ENCODE measurements at regions of chrX and their contacts with region 1.

Region 1: DNA sequence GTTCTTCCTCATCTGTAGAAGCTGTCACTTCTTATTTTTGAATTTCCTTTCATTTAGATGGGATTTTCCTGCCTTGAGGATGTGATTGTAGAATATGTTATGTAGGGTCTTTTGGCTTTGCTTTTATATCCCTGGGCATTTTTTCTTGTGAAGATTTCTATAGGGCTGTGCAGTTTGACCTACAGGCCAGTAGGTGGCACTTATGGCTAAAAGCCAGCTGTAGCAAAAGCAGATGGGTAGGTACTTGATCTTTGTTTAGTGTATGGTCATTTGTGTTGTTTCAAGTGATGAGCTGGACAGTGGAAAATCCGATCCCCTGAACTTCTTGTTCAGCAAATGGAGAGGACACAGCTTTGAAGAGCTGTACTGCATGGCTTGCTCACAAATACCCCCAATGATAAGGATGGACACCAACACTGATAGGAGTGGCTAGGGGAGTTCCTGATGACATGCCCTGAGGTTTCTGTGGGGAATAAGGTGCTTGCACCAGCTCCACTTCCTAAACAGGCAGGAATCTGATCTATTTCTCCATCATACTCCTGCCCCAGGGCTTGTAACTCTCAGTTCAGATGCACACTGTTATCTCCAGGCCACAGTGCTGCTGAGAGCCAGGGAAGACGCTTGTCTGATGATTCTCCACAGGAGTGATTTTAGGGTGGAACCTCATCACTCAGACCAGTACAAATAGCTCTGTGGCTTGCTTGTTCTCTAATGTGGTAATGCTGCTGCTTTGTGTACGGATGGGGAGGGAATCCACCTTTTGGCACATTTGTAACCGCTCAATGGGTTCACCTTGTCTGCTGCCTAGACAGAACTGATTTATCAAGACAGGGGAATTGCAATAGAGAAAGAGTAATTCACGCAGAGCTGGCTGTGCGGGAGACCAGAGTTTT is 417.1 kb upstream of the MAGEB16 start:
- DNase-seq: no peak
- ATAC-seq: no peak

Region 2: DNA sequence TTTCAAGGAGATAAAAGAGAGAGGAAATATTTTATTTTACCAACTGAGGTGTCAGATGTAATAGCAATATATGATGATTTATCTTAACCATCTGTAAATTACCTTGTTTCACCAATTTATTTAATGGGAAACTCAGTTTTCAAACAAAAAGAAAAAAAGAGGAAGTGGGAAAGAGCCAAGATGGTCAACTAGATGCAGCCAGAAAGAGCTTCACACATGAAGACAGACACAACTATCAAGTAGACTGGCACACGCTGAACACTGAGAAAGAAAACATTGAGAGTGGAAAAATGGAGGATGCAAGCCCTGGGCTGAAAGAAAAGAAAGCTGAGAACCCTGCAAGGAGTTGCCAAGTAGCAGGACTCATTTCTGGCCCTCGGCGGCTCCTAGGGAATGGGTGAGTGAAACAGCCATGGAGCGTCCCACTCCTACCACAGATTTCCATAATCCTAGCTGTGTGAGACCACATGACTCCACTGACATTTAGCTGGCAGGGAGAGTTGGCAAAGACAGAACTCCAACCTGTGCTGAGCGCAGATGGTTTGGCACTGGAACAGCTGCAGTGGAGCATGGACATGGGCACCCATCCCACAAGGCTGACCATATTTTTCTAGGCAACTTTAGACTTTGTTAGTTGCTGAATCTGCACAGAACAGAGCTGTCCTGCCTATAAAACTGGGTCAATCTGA is 29.1 kb before region 1 on chrX:
- intact Hi-C with region 1: no loop called
- DNase-seq: no peak
- ATAC-seq: no peak

Region 3: DNA sequence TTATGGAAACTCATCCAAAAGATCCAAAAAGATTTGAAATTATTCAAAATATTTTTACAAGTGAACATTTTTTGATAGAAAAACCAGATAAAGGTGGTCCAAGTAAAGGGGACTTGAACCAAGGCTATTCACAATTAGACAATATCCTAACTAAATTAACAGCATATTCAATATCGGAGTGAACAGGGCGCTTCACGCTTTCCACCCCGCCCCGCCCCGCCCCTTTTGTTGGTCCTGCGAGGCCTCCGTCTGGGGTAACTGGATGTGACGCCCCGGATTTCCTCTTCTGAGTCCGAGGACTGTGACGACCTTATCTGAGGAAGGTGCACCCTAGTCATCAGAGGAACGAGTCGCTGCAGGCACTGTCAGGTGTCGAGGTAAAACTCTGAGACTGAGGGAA is 417.0 kb after region 1 on chrX and contains the start of gene MAGEB16:
- intact Hi-C with region 1: loop called (anchors 5 kb)
- DNase-seq: no peak
- ATAC-seq: no peak
- total RNA-seq, gene MAGEB16: not detected